ENCODE measurements at regions of chr10 and their contacts with region 1.

Region 1: GRCh38 chr10:99845837-99846382 is 63.5 kb downstream of the ABCC2 start:
- DNase-seq: peak; percentile 71
- H3K4me3 ChIP-seq: peak overlapping the region in 1 of 2 experiments; percentile 41; a peak in 1 of 4 replicates
- H3K27ac ChIP-seq: peak overlapping the region in 1 of 2 experiments; percentile 28; a peak in 1 of 4 replicates
- H3K4me1 ChIP-seq: no peaks in the 10 kb centered on the region; a peak in 1 of 4 replicates
- H3K27me3 ChIP-seq: no peaks in the 10 kb centered on the region
- CTCF ChIP-seq: peak; percentile 93
- EP300 ChIP-seq: no peak
- RAD21 ChIP-seq: peak; percentile 97

Region 2: GRCh38 chr10:99172130-99172738 is 673.7 kb before region 1 on chr10:
- CTCF ChIA-PET with region 1: no interaction called
- POLR2A ChIA-PET with region 1: no interaction called
- DNase-seq: peak; percentile 72
- H3K4me3 ChIP-seq: peak overlapping the region in 1 of 2 experiments; percentile 43; a peak in 1 of 4 replicates
- H3K27ac ChIP-seq: no peak overlapping the region
- H3K4me1 ChIP-seq: no peaks in the 10 kb centered on the region
- H3K27me3 ChIP-seq: no peaks in the 10 kb centered on the region
- CTCF ChIP-seq: peak; percentile 38
- EP300 ChIP-seq: no peak
- RAD21 ChIP-seq: peak; percentile 91

Region 3: GRCh38 chr10:99676426-99676825 is 169.5 kb before region 1 on chr10:
- CTCF ChIA-PET with region 1: no interaction called
- POLR2A ChIA-PET with region 1: no interaction called
- DNase-seq: no peak
- H3K4me3 ChIP-seq: no peak overlapping the region
- H3K27ac ChIP-seq: peak overlapping the region; percentile 47 to 53; a peak in 3 of 4 replicates
- H3K4me1 ChIP-seq: peaks cover 0 to 4% of the 10 kb centered on the region in 2 experiments; a peak in 2 of 4 replicates
- H3K27me3 ChIP-seq: no peaks in the 10 kb centered on the region
- CTCF ChIP-seq: no peak
- EP300 ChIP-seq: peak in 1 of 2 experiments; percentile 29; a peak in 1 of 4 replicates
- RAD21 ChIP-seq: no peak

Region 4: DNA sequence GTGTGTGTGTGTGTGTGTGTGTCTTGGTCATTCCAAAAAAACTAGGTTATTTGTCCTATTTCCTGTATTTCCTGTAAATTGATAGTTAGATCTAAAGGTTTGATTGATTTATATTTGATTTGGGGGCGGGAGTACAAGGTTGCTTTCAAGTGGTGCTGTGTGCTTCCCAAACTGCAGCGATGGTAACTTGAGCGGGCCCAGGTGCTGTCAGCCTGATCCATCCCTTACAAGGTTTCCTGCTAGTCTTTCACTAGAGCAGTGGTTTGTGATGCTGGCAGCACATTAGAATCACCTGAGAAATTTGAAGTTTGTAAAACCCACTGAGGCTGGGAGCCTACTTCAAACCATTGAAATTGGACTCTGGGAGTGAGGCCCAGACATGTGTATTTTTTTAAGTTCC is 39.8 kb before region 1 on chr10:
- CTCF ChIA-PET with region 1: interaction called, 10 read pairs
- POLR2A ChIA-PET with region 1: no interaction called
- DNase-seq: no peak
- H3K4me3 ChIP-seq: no peak overlapping the region
- H3K27ac ChIP-seq: no peak overlapping the region
- H3K4me1 ChIP-seq: no peaks in the 10 kb centered on the region
- H3K27me3 ChIP-seq: no peaks in the 10 kb centered on the region
- CTCF ChIP-seq: no peak
- EP300 ChIP-seq: no peak
- RAD21 ChIP-seq: no peak

Region 5: GRCh38 chr10:99874341-99875085 is 28.6 kb after region 1 on chr10:
- CTCF ChIA-PET with region 1: interaction called, 12 read pairs
- POLR2A ChIA-PET with region 1: no interaction called
- DNase-seq: no peak
- H3K4me3 ChIP-seq: no peak overlapping the region
- H3K27ac ChIP-seq: peak overlapping the region in 1 of 2 experiments; percentile 21; a peak in 1 of 4 replicates
- H3K4me1 ChIP-seq: no peaks in the 10 kb centered on the region; a peak in 3 of 4 replicates
- H3K27me3 ChIP-seq: no peaks in the 10 kb centered on the region
- CTCF ChIP-seq: no peak
- EP300 ChIP-seq: no peak
- RAD21 ChIP-seq: no peak

Region 6: GRCh38 chr10:100009793-100010676 is 164.1 kb after region 1 on chr10 and contains the start of gene DNMBP:
- CTCF ChIA-PET with region 1: interaction called, 51 read pairs
- POLR2A ChIA-PET with region 1: no interaction called
- DNase-seq: peak; percentile 99
- H3K4me3 ChIP-seq: peak within 1 kb of the TSS; percentile 79 to 93
- H3K27ac ChIP-seq: peak within 1 kb of the TSS; percentile 50 to 99; a peak in 3 of 4 replicates
- H3K4me1 ChIP-seq: peaks cover 10 to 13% of the 10 kb centered on the region in 2 experiments
- H3K27me3 ChIP-seq: no peaks in the 10 kb centered on the region
- CTCF ChIP-seq: peak; percentile 65
- EP300 ChIP-seq: no peak
- RAD21 ChIP-seq: peak; percentile 29; the same call in 1 of the 2 replicates
- polyA plus RNA-seq, gene DNMBP: 36.0 and 40.2 TPM in 2 replicates

Region 7: DNA sequence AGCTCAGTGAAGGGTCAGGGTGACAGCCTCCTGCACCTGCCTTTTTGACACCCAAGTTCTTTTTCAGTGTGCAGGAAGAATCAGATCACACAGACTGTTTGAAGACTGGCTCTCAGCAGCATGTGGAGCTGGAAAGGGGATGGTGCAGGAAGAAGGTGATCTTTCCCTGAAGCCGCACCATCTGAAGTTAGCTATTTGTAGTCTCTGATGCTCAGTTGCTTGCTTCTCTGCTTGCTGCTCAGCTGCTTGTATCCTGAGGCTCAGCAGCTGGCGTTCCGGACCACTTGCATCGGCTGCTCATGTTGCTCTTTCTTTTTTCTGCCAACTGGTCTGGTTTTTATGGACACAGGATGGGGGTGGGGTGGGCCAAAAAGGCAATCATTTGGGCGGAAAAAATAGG is 179.7 kb after region 1 on chr10:
- CTCF ChIA-PET with region 1: interaction called, 14 read pairs
- POLR2A ChIA-PET with region 1: no interaction called
- DNase-seq: no peak
- H3K4me3 ChIP-seq: no peak overlapping the region
- H3K27ac ChIP-seq: no peak overlapping the region
- H3K4me1 ChIP-seq: peaks cover 0 to 5% of the 10 kb centered on the region in 2 experiments; a peak in 1 of 4 replicates
- H3K27me3 ChIP-seq: no peaks in the 10 kb centered on the region
- CTCF ChIP-seq: no peak
- EP300 ChIP-seq: no peak
- RAD21 ChIP-seq: no peak

Region 8: DNA sequence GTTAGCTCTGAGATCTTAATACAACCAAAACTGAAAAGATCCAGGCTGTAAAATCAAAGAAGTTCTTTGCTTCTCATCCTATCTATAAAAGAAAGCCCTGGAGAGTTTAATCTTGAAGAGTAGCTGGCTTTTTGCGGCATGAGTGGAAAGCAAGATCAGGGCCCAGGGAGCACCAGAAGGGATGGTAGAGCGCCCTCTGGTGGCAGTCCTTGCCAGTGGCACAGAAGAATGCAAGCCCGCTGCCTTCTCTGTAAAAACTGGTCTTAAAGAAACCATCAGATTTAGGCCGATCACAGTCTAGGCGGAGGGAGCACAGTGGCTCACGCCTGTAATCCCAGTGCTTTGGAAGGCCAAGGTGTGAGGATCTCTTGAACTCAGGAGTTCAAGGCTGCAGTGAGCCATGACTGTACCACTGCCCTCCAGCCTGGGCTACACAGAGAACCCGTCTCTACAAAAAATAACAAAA is 200.1 kb after region 1 on chr10:
- CTCF ChIA-PET with region 1: interaction called, 122 read pairs
- POLR2A ChIA-PET with region 1: no interaction called
- DNase-seq: peak; percentile 74
- H3K4me3 ChIP-seq: no peak overlapping the region; a peak in 1 of 4 replicates
- H3K27ac ChIP-seq: peak overlapping the region in 1 of 2 experiments; percentile 41; a peak in 1 of 4 replicates
- H3K4me1 ChIP-seq: peaks cover 0 to 12% of the 10 kb centered on the region in 2 experiments; a peak in 2 of 4 replicates
- H3K27me3 ChIP-seq: no peaks in the 10 kb centered on the region
- CTCF ChIP-seq: peak; percentile 97
- EP300 ChIP-seq: no peak
- RAD21 ChIP-seq: peak; percentile 87

Region 9: DNA sequence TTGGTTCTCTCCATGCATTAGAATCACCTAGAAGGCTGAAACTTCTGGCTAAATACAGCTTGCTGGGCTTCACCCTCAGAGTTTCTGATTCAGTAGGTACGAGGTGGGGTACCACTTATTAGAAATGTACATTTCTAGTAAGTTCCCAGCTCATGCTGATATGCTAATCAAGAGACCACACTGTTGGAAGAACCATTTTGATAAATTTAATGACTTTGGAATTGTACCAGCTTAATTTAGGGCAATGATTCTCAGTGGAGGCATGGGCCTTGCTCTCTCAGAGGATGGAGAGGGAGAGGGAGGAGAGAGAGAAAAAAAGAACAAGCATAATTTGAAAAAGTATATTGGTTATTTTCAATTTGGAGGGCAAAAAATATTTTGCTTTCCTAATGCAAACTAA is 215.5 kb after region 1 on chr10:
- CTCF ChIA-PET with region 1: interaction called, 11 read pairs
- POLR2A ChIA-PET with region 1: no interaction called
- DNase-seq: no peak
- H3K4me3 ChIP-seq: no peak overlapping the region
- H3K27ac ChIP-seq: no peak overlapping the region
- H3K4me1 ChIP-seq: no peaks in the 10 kb centered on the region
- H3K27me3 ChIP-seq: no peaks in the 10 kb centered on the region
- CTCF ChIP-seq: no peak
- EP300 ChIP-seq: no peak
- RAD21 ChIP-seq: no peak

Measured in SK-N-SH (cell line).